ENCODE measurements at regions of chr3 and their contacts with region 1.

Region 1: DNA sequence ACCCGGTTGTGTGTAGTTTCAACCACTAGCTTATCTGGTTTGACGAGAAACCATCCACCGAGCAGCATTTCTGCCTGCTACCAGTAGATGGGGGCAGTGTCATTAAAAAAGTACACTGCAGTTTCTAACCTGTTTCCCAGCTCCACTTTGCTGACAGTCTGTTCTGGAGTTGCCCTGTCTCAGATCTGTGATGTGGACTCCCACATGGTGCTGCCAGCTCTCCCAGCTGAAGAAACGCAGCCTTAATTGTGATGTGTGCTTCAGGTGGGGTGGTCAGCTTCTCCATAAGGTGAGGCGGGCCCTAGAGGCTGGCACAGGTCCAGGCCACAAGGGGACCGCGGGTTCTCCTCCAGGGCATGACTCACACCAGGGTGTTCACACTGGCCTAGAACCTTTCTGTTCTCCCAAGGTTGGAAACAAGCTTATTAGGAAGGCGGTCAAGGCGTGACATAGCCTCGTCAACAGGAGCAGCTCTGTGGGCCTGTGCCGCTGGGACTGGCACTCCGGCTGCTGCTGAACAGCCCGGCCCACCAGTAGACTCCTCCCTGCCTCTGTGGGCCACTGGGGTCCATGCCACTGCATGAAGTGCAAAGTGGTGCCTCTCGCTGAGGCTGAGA is 2.9 kb upstream of the FAM43A start:
- DNase-seq: peak; percentile 39 to 75 (median 63)
- H3K4me3 ChIP-seq: no peak overlapping the region
- H3K4me3 Mint-ChIP-seq: peak overlapping the region in 3 of 7 donors; percentile 2 to 70 (median 28)
- H3K27ac ChIP-seq: no peak overlapping the region
- H3K27ac Mint-ChIP-seq: peak overlapping the region in 4 of 8 donors; percentile 12 to 63 (median 46)
- H3K4me1 ChIP-seq: peaks cover 27% of the 10 kb centered on the region
- H3K4me1 Mint-ChIP-seq: peaks cover 26 to 38% (median 29%) of the 10 kb centered on the region in 3 donors
- H3K27me3 ChIP-seq: no peaks in the 10 kb centered on the region
- H3K27me3 Mint-ChIP-seq: peaks cover 2 to 4% of the 10 kb centered on the region in 2 donors

Region 2: DNA sequence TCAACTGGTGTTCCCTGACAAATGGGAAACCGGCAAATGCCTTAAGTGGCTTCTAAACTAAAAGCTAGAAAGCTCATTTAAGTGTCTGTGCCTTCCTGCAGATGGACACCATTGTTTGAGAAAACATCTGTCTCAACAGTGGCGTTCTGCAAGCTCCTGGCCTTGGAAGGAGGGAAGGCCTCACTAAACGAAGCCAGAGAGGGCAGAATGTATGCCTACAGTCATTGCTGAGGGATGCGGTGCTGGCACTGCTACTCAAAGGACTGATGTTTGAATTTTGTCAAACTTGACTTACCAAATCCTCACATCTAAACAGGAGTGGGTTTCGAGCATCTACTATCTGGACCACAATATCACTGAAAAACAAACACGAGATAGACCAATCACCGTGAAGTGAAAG is 23.0 kb before region 1 on chr3:
- CTCF ChIA-PET with region 1: no interaction called
- POLR2A ChIA-PET with region 1: no interaction called
- DNase-seq: no peak
- H3K4me3 ChIP-seq: no peak overlapping the region
- H3K4me3 Mint-ChIP-seq: no peak overlapping the region
- H3K27ac ChIP-seq: no peak overlapping the region
- H3K27ac Mint-ChIP-seq: no peak overlapping the region
- H3K4me1 ChIP-seq: peaks cover 9% of the 10 kb centered on the region
- H3K4me1 Mint-ChIP-seq: peaks cover 13 to 24% (median 22%) of the 10 kb centered on the region in 3 donors
- H3K27me3 ChIP-seq: no peaks in the 10 kb centered on the region
- H3K27me3 Mint-ChIP-seq: no peaks in the 10 kb centered on the region

Region 3: GRCh38 chr3:194671900-194672808 is 10.6 kb before region 1 on chr3 and contains the start of gene LSG1:
- CTCF ChIA-PET with region 1: interaction called, 88 read pairs
- POLR2A ChIA-PET with region 1: interaction called, 115 read pairs
- DNase-seq: peak; percentile 80 to 92 (median 86)
- H3K4me3 ChIP-seq: peak within 1 kb of the TSS; percentile 86
- H3K4me3 Mint-ChIP-seq: peak within 1 kb of the TSS; percentile 94 to 99 (median 99)
- H3K27ac ChIP-seq: peak within 1 kb of the TSS; percentile 95
- H3K27ac Mint-ChIP-seq: peak within 1 kb of the TSS; percentile 91 to 99 (median 99)
- H3K4me1 ChIP-seq: peaks cover 19% of the 10 kb centered on the region
- H3K4me1 Mint-ChIP-seq: peaks cover 29 to 58% (median 55%) of the 10 kb centered on the region in 3 donors
- H3K27me3 ChIP-seq: no peaks in the 10 kb centered on the region
- H3K27me3 Mint-ChIP-seq: peaks cover 3 to 4% of the 10 kb centered on the region in 2 donors
- total RNA-seq, gene LSG1: 65.2 to 68.8 TPM

Region 4: GRCh38 chr3:194696475-194697091 is 13.8 kb after region 1 on chr3:
- CTCF ChIA-PET with region 1: interaction called, 20 read pairs
- POLR2A ChIA-PET with region 1: no interaction called
- DNase-seq: no peak
- H3K4me3 ChIP-seq: no peak overlapping the region
- H3K4me3 Mint-ChIP-seq: peak overlapping the region in 1 of 7 donors; percentile 15
- H3K27ac ChIP-seq: no peak overlapping the region
- H3K27ac Mint-ChIP-seq: no peak overlapping the region
- H3K4me1 ChIP-seq: no peaks in the 10 kb centered on the region
- H3K4me1 Mint-ChIP-seq: peaks cover 0 to 8% (median 0%) of the 10 kb centered on the region in 3 donors
- H3K27me3 ChIP-seq: no peaks in the 10 kb centered on the region
- H3K27me3 Mint-ChIP-seq: peaks cover 7 to 20% of the 10 kb centered on the region in 2 donors

Region 5: DNA sequence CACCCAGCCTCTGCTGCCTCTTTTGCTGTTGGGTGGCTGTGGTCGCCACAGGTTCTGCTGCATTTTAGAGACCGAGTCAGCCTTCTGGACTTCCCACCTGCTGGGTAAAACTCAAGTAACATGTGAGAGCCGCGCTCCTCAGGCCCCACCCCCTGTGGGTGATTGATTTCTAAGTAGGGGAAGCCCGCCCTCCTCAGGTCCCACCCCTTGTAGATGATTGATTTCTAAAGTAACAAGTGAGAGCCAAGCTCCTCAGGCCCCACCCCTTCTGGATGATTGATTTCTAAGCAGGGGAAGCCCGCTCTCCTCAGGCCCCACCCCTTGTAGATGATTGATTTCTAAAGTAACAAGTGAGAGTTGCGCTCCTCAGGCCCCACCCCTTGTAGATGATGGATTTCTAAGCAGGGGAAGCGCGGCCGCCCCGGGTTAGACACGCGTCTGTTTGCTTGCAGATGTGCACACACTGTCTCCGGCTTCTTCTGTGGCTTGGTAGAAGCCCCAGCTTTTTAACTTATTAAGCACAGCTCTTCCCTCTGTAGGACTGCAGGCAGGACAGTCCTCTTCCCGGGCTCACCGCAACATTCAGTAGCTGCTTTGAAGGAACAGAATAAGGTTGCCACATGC is 86.3 kb after region 1 on chr3:
- CTCF ChIA-PET with region 1: interaction called, 3 read pairs
- POLR2A ChIA-PET with region 1: interaction called, 11 read pairs
- DNase-seq: peak; percentile 84 to 97 (median 93)
- H3K4me3 ChIP-seq: peak overlapping the region; percentile 71
- H3K4me3 Mint-ChIP-seq: peak overlapping the region; percentile 82 to 91 (median 83)
- H3K27ac ChIP-seq: peak overlapping the region; percentile 17
- H3K27ac Mint-ChIP-seq: peak overlapping the region; percentile 50 to 96 (median 90)
- H3K4me1 ChIP-seq: peaks cover 16% of the 10 kb centered on the region
- H3K4me1 Mint-ChIP-seq: peaks cover 27 to 33% (median 30%) of the 10 kb centered on the region in 3 donors
- H3K27me3 ChIP-seq: peaks cover 5% of the 10 kb centered on the region
- H3K27me3 Mint-ChIP-seq: peaks cover 1 to 19% of the 10 kb centered on the region in 2 donors

Region 6: DNA sequence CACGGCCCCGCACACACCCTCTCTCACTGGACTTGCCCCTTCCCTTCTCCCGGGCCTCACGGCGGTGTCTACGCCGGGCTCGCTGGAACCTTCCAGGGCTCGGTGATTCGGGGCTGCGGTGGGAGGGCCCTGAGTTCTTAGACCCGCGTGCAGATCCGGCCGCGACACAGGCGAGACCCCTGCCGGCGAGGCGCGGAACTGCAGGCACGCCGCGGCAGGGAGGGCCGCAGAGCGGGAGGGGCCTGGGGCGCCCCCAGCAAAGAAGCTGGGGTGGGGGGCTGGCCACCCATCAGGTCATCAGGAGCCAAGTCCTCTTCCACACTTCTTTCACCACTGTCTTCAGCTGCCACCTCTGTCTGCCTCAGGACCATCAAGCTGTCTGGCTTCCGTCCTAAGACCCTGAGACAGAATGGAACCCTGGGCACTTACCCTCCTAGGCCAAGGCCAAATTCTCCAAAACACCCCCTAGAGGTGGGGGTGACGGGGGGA is 423.7 kb after region 1 on chr3:
- CTCF ChIA-PET with region 1: interaction called, 59 read pairs
- POLR2A ChIA-PET with region 1: no interaction called
- DNase-seq: peak; percentile 56 to 75 (median 59)
- H3K4me3 ChIP-seq: peak overlapping the region; percentile 31
- H3K4me3 Mint-ChIP-seq: peak overlapping the region in 5 of 7 donors; percentile 34 to 70 (median 49)
- H3K27ac ChIP-seq: no peak overlapping the region
- H3K27ac Mint-ChIP-seq: peak overlapping the region in 1 of 8 donors; percentile 73
- H3K4me1 ChIP-seq: no peaks in the 10 kb centered on the region
- H3K4me1 Mint-ChIP-seq: peaks cover 5 to 8% (median 7%) of the 10 kb centered on the region in 3 donors
- H3K27me3 ChIP-seq: no peaks in the 10 kb centered on the region
- H3K27me3 Mint-ChIP-seq: no peaks in the 10 kb centered on the region

Region 7: GRCh38 chr3:195259475-195260279 is 576.9 kb after region 1 on chr3:
- CTCF ChIA-PET with region 1: interaction called, 29 read pairs
- POLR2A ChIA-PET with region 1: interaction called, 6 read pairs
- DNase-seq: peak; percentile 88 to 95 (median 93)
- H3K4me3 ChIP-seq: no peak overlapping the region
- H3K4me3 Mint-ChIP-seq: peak overlapping the region; percentile 66 to 80 (median 75)
- H3K27ac ChIP-seq: peak overlapping the region; percentile 85
- H3K27ac Mint-ChIP-seq: peak overlapping the region; percentile 42 to 97 (median 93)
- H3K4me1 ChIP-seq: peaks cover 18% of the 10 kb centered on the region
- H3K4me1 Mint-ChIP-seq: peaks cover 11 to 23% (median 15%) of the 10 kb centered on the region in 3 donors
- H3K27me3 ChIP-seq: no peaks in the 10 kb centered on the region
- H3K27me3 Mint-ChIP-seq: no peaks in the 10 kb centered on the region